ENCODE measurements at regions of chr9 and their contacts with region 1.

Region 1: DNA sequence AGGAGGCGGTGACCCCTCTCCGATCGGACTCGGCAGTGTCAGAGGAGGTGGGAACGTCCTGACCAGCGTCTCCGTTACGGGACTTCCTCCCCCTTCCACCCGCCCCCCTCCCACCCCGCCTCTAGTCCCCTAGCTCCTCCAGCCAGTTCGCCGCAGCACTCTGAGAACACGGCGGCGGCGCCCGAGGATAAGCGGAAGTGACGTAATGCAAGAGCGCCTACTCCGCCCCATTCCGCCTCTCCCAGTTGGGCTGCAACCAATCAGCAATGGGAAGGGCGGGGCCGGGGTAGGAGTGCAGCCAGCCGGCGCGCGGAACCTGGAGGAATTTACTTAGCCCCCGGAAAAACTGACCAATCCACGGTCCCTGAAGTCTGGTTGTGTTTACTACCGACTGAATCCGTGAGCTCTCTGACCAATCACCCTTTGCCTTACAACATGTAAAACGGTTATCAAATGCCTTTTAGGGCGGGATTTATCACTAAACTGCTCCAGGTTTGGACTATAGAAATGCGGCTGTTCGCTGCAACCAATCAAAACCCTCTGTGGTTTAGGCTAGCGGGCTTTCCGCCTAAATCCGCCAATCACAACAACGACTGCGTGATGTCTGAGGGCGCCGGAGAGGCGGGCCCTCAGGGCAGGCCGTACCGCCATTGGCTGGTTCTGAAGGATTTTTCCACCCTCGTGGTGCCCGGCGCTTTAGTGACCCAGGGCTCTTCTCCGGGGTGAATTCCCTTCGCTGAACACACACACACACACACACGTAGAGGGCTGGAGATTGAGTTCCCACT is at the start of gene ZBTB5:
- DNase-seq: peak; percentile 98 to 99
- ATAC-seq: peak; percentile 90 to 96 (median 93)
- H3K4me3 ChIP-seq: peak within 1 kb of the TSS; percentile 72 to 99 (median 88)
- H3K27ac ChIP-seq: peak within 1 kb of the TSS; percentile 90 to 99 (median 97)
- H3K4me1 ChIP-seq: peaks cover 2 to 42% (median 34%) of the 10 kb centered on the region in 9 donors
- H3K27me3 ChIP-seq: no peaks in the 10 kb centered on the region
- CTCF ChIP-seq: no peak
- total RNA-seq, gene ZBTB5: 5.4 to 7.5 (median 6.3) TPM

Region 2: GRCh38 chr9:36903541-36904435 is 561.7 kb before region 1 on chr9:
- intact Hi-C with region 1: no loop called
- DNase-seq: no peak
- ATAC-seq: peak in 2 of 8 donors; percentile 48 to 50
- H3K4me3 ChIP-seq: no peak overlapping the region
- H3K27ac ChIP-seq: no peak overlapping the region
- H3K4me1 ChIP-seq: no peaks in the 10 kb centered on the region
- H3K27me3 ChIP-seq: peaks cover 0 to 54% (median 39%) of the 10 kb centered on the region in 7 donors
- CTCF ChIP-seq: no peak

Region 3: GRCh38 chr9:37283730-37284325 is 181.6 kb before region 1 on chr9:
- intact Hi-C with region 1: no loop called
- DNase-seq: no peak
- ATAC-seq: no peak
- H3K4me3 ChIP-seq: no peak overlapping the region
- H3K27ac ChIP-seq: peak overlapping the region in 1 of 10 donors; percentile 37
- H3K4me1 ChIP-seq: peaks cover 0 to 21% (median 0%) of the 10 kb centered on the region in 9 donors
- H3K27me3 ChIP-seq: no peaks in the 10 kb centered on the region
- CTCF ChIP-seq: no peak

Region 4: GRCh38 chr9:37422289-37423104 is 42.9 kb before region 1 on chr9 and contains the start of gene GRHPR:
- intact Hi-C with region 1: loop called in 5 of 10 experiments (anchors 1 to 5 kb)
- DNase-seq: peak; percentile 90 to 94
- ATAC-seq: peak; percentile 97 to 99 (median 98)
- H3K4me3 ChIP-seq: peak within 1 kb of the TSS; percentile 72 to 99 (median 86)
- H3K27ac ChIP-seq: peak within 1 kb of the TSS; percentile 51 to 92 (median 91)
- H3K4me1 ChIP-seq: peaks cover 14 to 34% (median 30%) of the 10 kb centered on the region in 9 donors
- H3K27me3 ChIP-seq: no peaks in the 10 kb centered on the region
- CTCF ChIP-seq: no peak
- total RNA-seq, gene GRHPR: 101 to 142 (median 114) TPM

Region 5: DNA sequence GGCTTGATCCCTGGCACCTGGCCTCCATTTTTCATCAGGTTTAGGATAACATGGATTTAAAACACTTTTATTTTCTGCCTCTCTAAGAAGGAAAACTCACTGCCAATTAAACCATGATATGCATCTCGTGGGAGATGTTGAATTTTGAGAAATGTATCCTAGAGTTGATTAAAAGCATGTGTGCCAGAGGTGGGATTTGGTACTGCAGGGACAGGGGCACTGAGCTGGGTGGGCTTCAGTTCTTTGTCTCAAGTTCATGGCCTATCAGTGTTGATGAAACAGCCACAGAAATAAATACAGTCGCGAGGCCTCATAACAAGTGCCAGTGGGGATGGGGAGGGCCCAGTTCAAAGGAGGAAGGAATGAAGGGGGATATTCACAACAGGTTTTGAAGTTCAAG is 55.2 kb after region 1 on chr9:
- intact Hi-C with region 1: no loop called
- DNase-seq: no peak
- ATAC-seq: no peak
- H3K4me3 ChIP-seq: no peak overlapping the region
- H3K27ac ChIP-seq: no peak overlapping the region
- H3K4me1 ChIP-seq: no peaks in the 10 kb centered on the region
- H3K27me3 ChIP-seq: no peaks in the 10 kb centered on the region
- CTCF ChIP-seq: peak in 1 of 9 donors; percentile 10

Region 6: DNA sequence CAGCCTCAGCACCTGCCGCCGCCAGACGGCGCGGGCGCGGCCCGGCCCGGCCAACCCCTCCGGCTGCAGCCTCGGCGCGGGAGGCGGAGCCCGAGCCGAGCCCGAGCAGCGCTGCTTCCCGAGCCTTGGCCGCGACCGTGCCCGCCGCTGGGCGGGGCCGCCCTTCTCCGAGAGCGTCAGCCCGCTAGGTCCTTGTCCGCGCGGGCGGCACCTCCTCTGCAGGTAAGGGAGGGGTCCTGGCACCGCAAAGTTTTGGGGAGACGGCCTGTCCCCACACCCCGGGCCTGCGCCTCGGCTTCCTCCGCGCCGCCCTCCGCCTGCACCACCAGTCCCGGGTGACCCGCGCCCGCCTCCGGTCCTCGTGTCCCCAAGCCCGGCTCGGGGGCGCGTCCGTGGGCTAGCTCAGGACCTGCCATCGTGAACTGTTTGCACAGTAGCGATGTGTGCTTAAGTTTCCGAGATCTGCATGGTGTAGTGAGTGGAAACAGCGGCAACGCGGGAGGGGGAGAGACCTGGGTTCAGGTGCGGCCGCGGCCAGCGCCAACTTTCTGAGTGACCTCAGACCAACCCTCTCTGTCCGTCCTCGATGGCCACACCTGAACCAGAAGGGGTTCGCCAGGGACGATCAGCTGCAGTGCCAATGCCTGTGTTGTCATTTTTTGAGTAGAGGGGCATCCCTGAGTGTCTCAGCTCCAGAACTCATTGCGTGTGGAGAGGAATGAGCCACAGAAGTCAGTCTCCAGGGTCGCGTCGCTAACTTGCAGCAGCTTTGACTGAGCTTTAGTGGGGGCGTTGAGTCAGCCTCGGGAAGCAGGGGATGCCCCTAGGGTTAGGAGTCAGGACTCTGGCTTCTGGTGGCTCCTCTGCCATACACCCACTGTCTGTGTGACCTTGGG is 185.7 kb after region 1 on chr9 and contains the start of gene FRMPD1:
- intact Hi-C with region 1: no loop called
- DNase-seq: peak; percentile 14 to 66
- ATAC-seq: peak; percentile 73 to 94 (median 88)
- H3K4me3 ChIP-seq: peak within 1 kb of the TSS; percentile 45 to 68 (median 64)
- H3K27ac ChIP-seq: no peak within 1 kb of the TSS
- H3K4me1 ChIP-seq: peaks cover 0 to 15% (median 7%) of the 10 kb centered on the region in 9 donors
- H3K27me3 ChIP-seq: peaks cover 5 to 77% (median 35%) of the 10 kb centered on the region in 7 donors
- CTCF ChIP-seq: peak in 1 of 9 donors; percentile 8
- total RNA-seq, gene FRMPD1: 0.38 to 1.7 (median 0.67) TPM